HCT116 (cell line): ENCODE measurements at regions of chr17 and their contacts with region 1.

Region 1: GRCh38 chr17:82022981-82023374 is at the start of gene LRRC45:
- DNase-seq: peak; percentile 100
- ATAC-seq: peak; percentile 87
- H3K4me3 ChIP-seq: peak within 1 kb of the TSS; percentile 89 to 100
- H3K27ac ChIP-seq: peak within 1 kb of the TSS; percentile 96
- H3K4me1 ChIP-seq: peaks cover 29 to 47% of the 10 kb centered on the region in 2 experiments
- H3K27me3 ChIP-seq: no peaks in the 10 kb centered on the region
- CTCF ChIP-seq: no peak
- POLR2A ChIP-seq: no peak
- RAD21 ChIP-seq: no peak
- total RNA-seq, gene LRRC45: 40.1 TPM

Region 2: GRCh38 chr17:81230043-81230820 is 792.7 kb before region 1 on chr17:
- CTCF ChIA-PET with region 1: no interaction called
- POLR2A ChIA-PET with region 1: no interaction called
- RAD21 ChIA-PET with region 1: no interaction called
- intact Hi-C with region 1: no loop called
- DNase-seq: no peak
- ATAC-seq: peak; percentile 85
- H3K4me3 ChIP-seq: no peak overlapping the region
- H3K27ac ChIP-seq: no peak overlapping the region
- H3K4me1 ChIP-seq: no peaks in the 10 kb centered on the region
- H3K27me3 ChIP-seq: no peaks in the 10 kb centered on the region
- CTCF ChIP-seq: peak in 2 of 3 experiments; percentile 85 to 87; a peak in 5 of 6 replicates
- POLR2A ChIP-seq: no peak
- RAD21 ChIP-seq: no peak

Region 3: GRCh38 chr17:81871387-81872230 is 151.4 kb before region 1 on chr17:
- CTCF ChIA-PET with region 1: interaction called, 27 read pairs
- POLR2A ChIA-PET with region 1: interaction called, 3 read pairs
- RAD21 ChIA-PET with region 1: no interaction called
- intact Hi-C with region 1: loop called (anchors 1 kb)
- DNase-seq: peak; percentile 80
- ATAC-seq: peak; percentile 0
- H3K4me3 ChIP-seq: peak overlapping the region; percentile 71 to 87
- H3K27ac ChIP-seq: peak overlapping the region; percentile 99
- H3K4me1 ChIP-seq: peaks cover 32 to 67% of the 10 kb centered on the region in 2 experiments
- H3K27me3 ChIP-seq: no peaks in the 10 kb centered on the region
- CTCF ChIP-seq: no peak; a peak in 1 of 6 replicates
- POLR2A ChIP-seq: no peak
- RAD21 ChIP-seq: no peak

Region 4: GRCh38 chr17:81911277-81911961 is 111.6 kb before region 1 on chr17 and contains the start of gene PCYT2:
- CTCF ChIA-PET with region 1: interaction called, 9 read pairs
- POLR2A ChIA-PET with region 1: no interaction called
- RAD21 ChIA-PET with region 1: no interaction called
- intact Hi-C with region 1: loop called (anchors 5 kb)
- DNase-seq: peak; percentile 90
- ATAC-seq: peak; percentile 88
- H3K4me3 ChIP-seq: peak within 1 kb of the TSS; percentile 85 to 94
- H3K27ac ChIP-seq: peak within 1 kb of the TSS; percentile 72
- H3K4me1 ChIP-seq: peaks cover 34 to 47% of the 10 kb centered on the region in 2 experiments
- H3K27me3 ChIP-seq: no peaks in the 10 kb centered on the region
- CTCF ChIP-seq: peak in 2 of 3 experiments; percentile 39 to 51; a peak in 4 of 6 replicates
- POLR2A ChIP-seq: no peak
- RAD21 ChIP-seq: no peak
- total RNA-seq, gene PCYT2: 51.5 TPM

Region 5: GRCh38 chr17:81959362-81960129 is 63.4 kb before region 1 on chr17:
- CTCF ChIA-PET with region 1: interaction called, 151 read pairs
- POLR2A ChIA-PET with region 1: no interaction called
- RAD21 ChIA-PET with region 1: interaction called, 40 to 50 read pairs
- intact Hi-C with region 1: loop called (anchors 1 kb)
- DNase-seq: no peak
- ATAC-seq: peak; percentile 77
- H3K4me3 ChIP-seq: peak overlapping the region; percentile 50 to 69
- H3K27ac ChIP-seq: peak overlapping the region; percentile 67; the same call in 1 of the 2 replicates
- H3K4me1 ChIP-seq: peaks cover 11 to 22% of the 10 kb centered on the region in 2 experiments
- H3K27me3 ChIP-seq: no peaks in the 10 kb centered on the region
- CTCF ChIP-seq: peak; percentile 58 to 97 (median 67)
- POLR2A ChIP-seq: no peak
- RAD21 ChIP-seq: peak; percentile 90

Region 6: DNA sequence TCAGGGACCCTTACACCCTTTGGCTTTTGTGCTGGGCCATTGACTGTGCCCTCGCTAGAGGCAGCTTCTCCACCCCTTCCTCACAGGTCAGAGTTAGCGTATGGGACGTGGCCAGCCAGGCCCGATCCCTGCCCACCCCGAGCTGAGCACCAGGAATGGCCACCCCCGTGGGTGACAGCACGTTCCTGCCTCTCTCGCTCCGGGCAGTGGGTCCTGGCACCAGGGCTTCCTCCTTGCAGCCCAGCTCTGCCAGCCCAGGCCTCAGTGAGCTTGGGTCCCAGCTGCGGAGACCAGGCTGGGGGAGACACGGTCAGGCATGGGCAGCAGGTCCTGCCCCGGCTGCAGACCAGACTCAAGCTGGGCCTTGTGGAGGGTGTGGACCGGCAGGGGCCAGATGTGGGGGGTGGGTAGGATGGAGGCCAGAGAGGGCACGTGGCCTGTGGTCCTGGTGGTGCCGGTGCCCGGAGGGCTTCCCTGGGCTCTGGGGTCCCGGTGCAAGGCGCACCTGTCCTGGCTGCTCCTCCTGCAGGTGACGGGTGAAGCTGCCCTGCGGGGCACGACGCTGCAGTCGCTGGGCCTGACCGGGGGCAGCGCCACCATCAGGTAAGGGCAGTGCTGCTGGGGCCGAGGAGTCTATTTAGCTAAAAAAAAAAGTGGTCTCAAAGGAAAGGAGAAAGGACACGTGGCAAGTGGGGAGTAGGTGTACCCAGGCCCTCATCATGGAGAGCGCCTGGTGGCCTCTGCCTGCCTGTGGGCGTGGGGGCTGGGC is 27.3 kb before region 1 on chr17:
- CTCF ChIA-PET with region 1: no interaction called
- POLR2A ChIA-PET with region 1: no interaction called
- RAD21 ChIA-PET with region 1: no interaction called
- intact Hi-C with region 1: no loop called
- DNase-seq: no peak
- ATAC-seq: no peak
- H3K4me3 ChIP-seq: no peak overlapping the region
- H3K27ac ChIP-seq: no peak overlapping the region; the same call in 1 of the 2 replicates
- H3K4me1 ChIP-seq: peaks cover 13 to 21% of the 10 kb centered on the region in 2 experiments; a peak in 3 of 4 replicates
- H3K27me3 ChIP-seq: no peaks in the 10 kb centered on the region
- CTCF ChIP-seq: peak in 2 of 3 experiments; percentile 2 to 12; a peak in 1 of 6 replicates
- POLR2A ChIP-seq: no peak
- RAD21 ChIP-seq: no peak

Region 7: GRCh38 chr17:82037113-82037888 is 14.3 kb after region 1 on chr17 and contains the start of gene DCXR:
- CTCF ChIA-PET with region 1: interaction called, 57 read pairs
- POLR2A ChIA-PET with region 1: interaction called, 6 read pairs
- RAD21 ChIA-PET with region 1: interaction called in 1 of 2 experiments, 11 read pairs
- intact Hi-C with region 1: no loop called
- DNase-seq: peak; percentile 96
- ATAC-seq: peak; percentile 89
- H3K4me3 ChIP-seq: peak within 1 kb of the TSS; percentile 92 to 93
- H3K27ac ChIP-seq: peak within 1 kb of the TSS; percentile 91
- H3K4me1 ChIP-seq: peaks cover 18 to 48% of the 10 kb centered on the region in 2 experiments
- H3K27me3 ChIP-seq: no peaks in the 10 kb centered on the region
- CTCF ChIP-seq: peak; percentile 66 to 91 (median 79)
- POLR2A ChIP-seq: peak; percentile 88
- RAD21 ChIP-seq: no peak
- total RNA-seq, gene DCXR: 306 TPM

Region 8: DNA sequence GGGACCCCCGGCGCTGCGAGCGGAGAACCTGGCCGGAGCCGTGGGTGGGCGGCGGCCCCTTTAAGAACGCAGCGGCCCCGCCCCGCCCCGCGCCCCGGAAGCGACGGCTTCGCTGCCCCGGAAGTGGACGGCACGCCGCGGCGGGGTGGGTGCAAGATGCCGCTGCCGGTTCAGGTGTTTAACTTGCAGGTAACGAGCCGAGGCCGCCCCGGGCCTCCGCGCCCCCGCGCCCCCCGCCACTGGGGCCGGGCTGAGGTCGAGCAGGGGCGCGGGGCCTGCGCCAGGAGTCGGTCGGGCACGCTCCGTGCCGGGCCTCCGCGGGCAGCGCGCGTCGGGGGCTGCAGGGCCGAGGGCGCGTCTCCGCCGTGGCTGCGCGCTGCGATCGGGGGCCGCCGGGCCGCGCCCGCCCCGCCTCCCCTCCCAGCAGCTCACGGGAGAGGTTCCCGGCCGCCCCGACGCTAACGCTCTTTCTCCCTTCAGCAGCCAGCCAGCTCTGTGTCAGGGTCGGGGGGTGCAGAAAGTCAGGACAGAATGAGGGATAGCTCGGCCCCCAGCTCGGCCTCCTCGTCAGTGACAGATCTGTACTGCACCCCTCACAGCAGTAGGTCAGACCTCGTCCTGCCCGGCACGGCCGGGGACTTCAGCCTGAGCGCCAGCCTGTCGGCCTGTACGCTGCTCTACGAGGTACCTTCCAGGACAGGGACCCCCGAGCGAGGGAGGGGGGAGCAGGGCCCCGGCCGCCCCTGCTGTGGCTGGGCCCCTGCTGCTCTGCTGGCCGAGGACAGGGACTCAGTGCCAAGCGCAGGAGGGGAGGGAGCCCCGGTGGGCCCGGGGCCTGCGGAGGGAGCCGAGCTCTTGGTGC is 29.0 kb after region 1 on chr17 and contains the starts of genes GPS1 and RFNG:
- CTCF ChIA-PET with region 1: no interaction called
- POLR2A ChIA-PET with region 1: no interaction called
- RAD21 ChIA-PET with region 1: no interaction called
- intact Hi-C with region 1: no loop called
- DNase-seq: no peak
- ATAC-seq: peak; percentile 83
- H3K4me3 ChIP-seq: peak within 1 kb of the TSS; percentile 94 to 99
- H3K27ac ChIP-seq: peak within 1 kb of the TSS; percentile 81
- H3K4me1 ChIP-seq: peaks cover 13 to 34% of the 10 kb centered on the region in 2 experiments; a peak in 3 of 4 replicates
- H3K27me3 ChIP-seq: no peaks in the 10 kb centered on the region
- CTCF ChIP-seq: no peak
- POLR2A ChIP-seq: no peak
- RAD21 ChIP-seq: no peak
- total RNA-seq, gene GPS1: 205 TPM
- total RNA-seq, gene RFNG: 52.0 TPM